Cardiac septum (tissue), 1 donor: ENCODE measurements at regions of chr9 and their contacts with region 1.

Region 1: GRCh38 chr9:107484117-107484723 is 5.3 kb downstream of the KLF4 start:
- DNase-seq: no peak

Region 2: DNA sequence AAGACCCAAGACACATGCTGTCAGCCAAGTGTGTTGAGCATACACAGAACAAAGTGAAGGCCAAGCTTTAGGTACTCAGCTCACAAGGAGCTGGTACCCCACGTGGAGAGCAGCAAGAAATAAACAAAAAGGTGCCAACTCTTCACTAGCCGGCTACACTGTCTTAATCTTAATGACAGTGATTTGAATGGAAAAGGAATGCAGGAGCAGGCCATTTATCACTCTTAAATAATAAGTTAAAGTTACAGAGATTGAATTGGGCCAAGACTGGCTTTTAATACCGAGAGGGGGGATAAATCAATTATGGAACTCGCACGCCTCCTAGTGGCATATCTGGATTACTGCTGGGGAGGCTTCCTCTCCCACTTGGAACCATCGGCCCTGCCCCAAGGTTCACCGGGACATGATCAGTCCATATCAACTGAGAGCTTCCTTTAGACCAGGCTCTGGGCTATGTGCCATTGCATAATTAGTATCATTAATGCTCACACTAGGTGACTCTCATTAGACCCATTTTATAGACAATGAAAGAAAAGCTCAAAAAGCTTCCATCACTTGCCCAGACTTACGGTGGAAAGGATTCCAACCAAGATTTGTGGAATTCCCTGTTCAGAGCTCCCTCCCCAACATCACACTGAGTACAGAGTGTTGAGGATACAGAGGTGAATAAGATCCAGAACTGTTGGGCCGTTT is 1277.6 kb after region 1 on chr9:
- intact Hi-C with region 1: loop called (anchors 5 kb)
- DNase-seq: no peak